ENCODE measurements at regions of chr6 and their contacts with region 1.

Region 1: GRCh38 chr6:119110601-119111548 is 32.4 kb upstream of the FAM184A start:
- DNase-seq: peak; percentile 62
- H3K4me3 Mint-ChIP-seq: no peak overlapping the region
- H3K27ac Mint-ChIP-seq: no peak overlapping the region
- H3K4me1 Mint-ChIP-seq: peaks cover 22% of the 10 kb centered on the region
- H3K27me3 Mint-ChIP-seq: no peaks in the 10 kb centered on the region

Region 2: GRCh38 chr6:117976030-117976651 is 1134.7 kb before region 1 on chr6:
- CTCF ChIA-PET with region 1: no interaction called
- intact Hi-C with region 1: loop called (anchors 5 kb)
- DNase-seq: peak; percentile 17
- H3K4me3 Mint-ChIP-seq: no peak overlapping the region
- H3K27ac Mint-ChIP-seq: no peak overlapping the region
- H3K4me1 Mint-ChIP-seq: no peaks in the 10 kb centered on the region
- H3K27me3 Mint-ChIP-seq: peaks cover 8% of the 10 kb centered on the region

Region 3: DNA sequence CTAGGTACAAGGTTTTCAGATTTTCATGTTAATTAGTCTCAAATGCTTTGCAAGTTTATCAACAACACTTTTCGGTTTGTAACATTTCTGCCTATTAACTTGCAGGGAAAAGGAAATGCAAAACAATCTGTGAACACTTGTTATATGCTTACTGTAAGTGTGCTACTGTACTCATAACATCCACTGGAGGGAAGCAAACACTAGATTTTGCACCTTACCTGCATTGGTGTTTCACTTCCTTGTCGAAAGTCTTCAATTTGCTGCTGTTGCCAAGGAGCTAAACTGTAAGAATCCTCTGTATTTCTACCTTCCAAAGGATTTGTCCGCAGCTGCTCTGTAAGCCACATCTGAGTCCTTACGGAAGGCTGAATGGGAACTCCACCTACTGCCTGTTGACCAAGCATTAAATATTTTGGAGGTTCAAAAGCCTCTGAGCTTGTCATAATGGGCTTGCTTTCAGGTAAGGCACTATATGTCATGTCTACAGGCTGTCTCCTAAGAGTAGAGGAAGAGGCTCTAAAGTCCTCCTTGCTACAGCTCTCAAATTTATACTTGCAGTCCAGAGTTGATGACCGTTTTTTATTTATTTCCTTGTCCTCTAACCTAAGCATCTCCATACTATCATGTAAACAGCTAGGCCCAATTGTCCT is 545.4 kb before region 1 on chr6:
- CTCF ChIA-PET with region 1: no interaction called
- intact Hi-C with region 1: loop called (anchors 1 kb)
- DNase-seq: peak; percentile 26
- H3K4me3 Mint-ChIP-seq: no peak overlapping the region
- H3K27ac Mint-ChIP-seq: peak overlapping the region; percentile 12
- H3K4me1 Mint-ChIP-seq: peaks cover 28% of the 10 kb centered on the region
- H3K27me3 Mint-ChIP-seq: no peaks in the 10 kb centered on the region

Region 4: DNA sequence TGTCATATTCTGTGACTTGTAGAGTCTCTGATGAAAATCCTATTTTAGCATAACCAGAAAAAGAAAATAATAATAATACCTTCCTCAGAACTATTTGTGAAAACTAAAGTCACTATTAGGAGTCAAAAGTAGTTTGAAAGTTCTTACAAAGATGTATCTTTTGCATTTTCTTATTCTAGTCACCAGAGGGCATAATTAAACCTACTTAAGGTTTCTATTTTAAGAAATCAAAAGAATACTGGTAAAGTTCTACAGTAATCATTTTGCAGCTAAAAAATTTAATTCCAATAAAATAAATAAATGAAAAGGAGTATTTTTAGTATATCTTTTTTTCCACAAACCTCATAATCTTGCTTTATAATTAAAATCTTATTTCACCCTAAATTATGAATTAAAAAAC is 147.9 kb before region 1 on chr6:
- CTCF ChIA-PET with region 1: interaction called, 85 read pairs
- intact Hi-C with region 1: loop called (anchors 1 kb)
- DNase-seq: no peak
- H3K4me3 Mint-ChIP-seq: no peak overlapping the region
- H3K27ac Mint-ChIP-seq: no peak overlapping the region
- H3K4me1 Mint-ChIP-seq: peaks cover 4% of the 10 kb centered on the region
- H3K27me3 Mint-ChIP-seq: no peaks in the 10 kb centered on the region

Region 5: GRCh38 chr6:118993803-118994251 is 117.0 kb before region 1 on chr6:
- CTCF ChIA-PET with region 1: no interaction called
- intact Hi-C with region 1: no loop called
- DNase-seq: no peak
- H3K4me3 Mint-ChIP-seq: no peak overlapping the region
- H3K27ac Mint-ChIP-seq: no peak overlapping the region
- H3K4me1 Mint-ChIP-seq: peaks cover 10% of the 10 kb centered on the region
- H3K27me3 Mint-ChIP-seq: no peaks in the 10 kb centered on the region

Region 6: GRCh38 chr6:119052292-119052889 is 58.5 kb before region 1 on chr6:
- CTCF ChIA-PET with region 1: no interaction called
- intact Hi-C with region 1: loop called (anchors 2 kb)
- DNase-seq: peak; percentile 69
- H3K4me3 Mint-ChIP-seq: no peak overlapping the region
- H3K27ac Mint-ChIP-seq: peak overlapping the region; percentile 30
- H3K4me1 Mint-ChIP-seq: peaks cover 30% of the 10 kb centered on the region
- H3K27me3 Mint-ChIP-seq: no peaks in the 10 kb centered on the region

Region 7: GRCh38 chr6:119096721-119097565 is 13.9 kb before region 1 on chr6:
- CTCF ChIA-PET with region 1: interaction called, 16 read pairs
- intact Hi-C with region 1: no loop called
- DNase-seq: no peak
- H3K4me3 Mint-ChIP-seq: no peak overlapping the region
- H3K27ac Mint-ChIP-seq: no peak overlapping the region
- H3K4me1 Mint-ChIP-seq: peaks cover 17% of the 10 kb centered on the region
- H3K27me3 Mint-ChIP-seq: no peaks in the 10 kb centered on the region